AG04450 (cell line): ENCODE measurements at regions of chr9 and their contacts with region 1.

Region 1: DNA sequence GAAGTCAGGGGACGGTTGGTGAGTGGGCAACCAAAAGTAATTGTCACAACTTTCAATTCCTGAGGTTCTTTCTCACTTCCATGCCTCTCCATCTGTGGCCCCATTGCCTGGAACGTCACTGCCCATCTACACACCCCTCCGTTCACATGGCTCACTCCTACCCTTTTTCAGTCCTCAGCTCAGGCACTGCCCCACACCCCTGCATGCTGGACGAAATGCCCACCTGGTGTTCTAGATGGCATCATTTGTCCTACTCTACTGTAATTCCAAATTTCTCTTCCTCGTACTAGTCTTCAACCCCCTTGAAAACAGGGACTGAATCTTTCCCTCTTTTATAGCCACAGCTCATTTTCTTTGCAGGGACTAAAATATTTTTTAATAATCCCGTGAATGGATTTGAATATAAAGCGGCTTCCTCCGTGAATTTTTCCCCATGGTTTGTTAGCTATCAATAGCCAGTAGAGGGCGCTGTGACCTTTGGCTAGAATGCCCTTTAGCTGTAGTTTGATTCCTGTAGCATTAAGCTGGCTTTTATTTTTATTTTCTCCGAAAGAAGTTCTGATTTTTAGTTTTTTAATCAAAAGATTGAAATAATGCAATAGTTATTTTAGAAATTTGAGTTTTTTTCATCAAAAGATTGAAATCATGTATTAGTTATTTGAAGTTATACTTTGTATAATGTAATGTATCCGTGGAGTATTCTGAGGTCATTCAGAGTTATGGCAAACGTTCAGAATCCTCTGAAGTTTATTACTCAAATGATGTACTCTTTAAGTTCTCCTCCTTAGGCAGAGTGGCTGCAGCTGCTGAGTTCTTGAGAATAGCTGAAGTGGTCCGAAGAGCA is 232.1 kb downstream of the SH3GL2 start:
- DNase-seq: peak; percentile 23
- H3K4me3 ChIP-seq: no peak overlapping the region
- H3K27ac ChIP-seq: no peak overlapping the region
- H3K27me3 ChIP-seq: peaks cover 3% of the 10 kb centered on the region
- CTCF ChIP-seq: peak; percentile 92

Region 2: DNA sequence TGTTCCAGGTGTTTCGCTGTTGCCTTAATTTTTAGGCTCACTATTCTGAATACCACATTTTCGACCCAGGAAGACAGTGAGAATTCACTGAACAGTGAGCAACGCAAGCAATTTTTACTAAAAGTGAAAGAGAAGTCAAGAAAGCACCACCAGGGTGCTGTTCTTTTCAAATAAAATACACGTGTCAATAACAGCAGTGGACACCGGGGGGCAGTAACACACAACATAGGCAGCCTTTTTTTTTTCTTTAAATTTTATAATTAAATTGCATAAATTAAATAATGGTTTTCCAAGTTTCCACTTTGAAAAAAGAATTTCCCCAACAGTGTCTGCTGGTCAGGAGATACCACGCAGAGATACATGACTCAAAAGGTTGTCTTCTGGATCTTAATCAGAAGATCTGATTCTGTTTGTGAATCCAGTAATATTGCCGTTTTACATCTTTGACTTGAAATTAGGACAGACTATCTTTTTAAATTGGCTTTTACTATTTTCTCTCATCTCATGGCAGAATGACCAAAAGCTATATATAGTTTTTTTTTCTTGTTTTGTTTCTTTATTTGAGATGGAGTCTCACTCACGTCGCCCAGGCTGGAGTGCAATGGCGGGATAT is 279.2 kb before region 1 on chr9:
- CTCF ChIA-PET with region 1: interaction called, 45 read pairs
- POLR2A ChIA-PET with region 1: no interaction called
- DNase-seq: peak; percentile 13
- H3K4me3 ChIP-seq: peak overlapping the region; percentile 39
- H3K27ac ChIP-seq: no peak overlapping the region
- H3K27me3 ChIP-seq: peaks cover 5% of the 10 kb centered on the region
- CTCF ChIP-seq: peak; percentile 82

Region 3: GRCh38 chr9:17795744-17796143 is 15.2 kb before region 1 on chr9:
- CTCF ChIA-PET with region 1: interaction called, 37 read pairs
- POLR2A ChIA-PET with region 1: no interaction called
- DNase-seq: no peak
- H3K4me3 ChIP-seq: no peak overlapping the region
- H3K27ac ChIP-seq: no peak overlapping the region
- H3K27me3 ChIP-seq: no peaks in the 10 kb centered on the region
- CTCF ChIP-seq: no peak

Region 4: GRCh38 chr9:17837965-17838364 is 27.0 kb after region 1 on chr9:
- CTCF ChIA-PET with region 1: interaction called, 22 read pairs
- POLR2A ChIA-PET with region 1: no interaction called
- DNase-seq: no peak
- H3K4me3 ChIP-seq: no peak overlapping the region
- H3K27ac ChIP-seq: no peak overlapping the region
- H3K27me3 ChIP-seq: no peaks in the 10 kb centered on the region
- CTCF ChIP-seq: peak; percentile 25; the same call in 1 of the 2 replicates

Region 5: GRCh38 chr9:17852108-17852507 is 41.2 kb after region 1 on chr9:
- CTCF ChIA-PET with region 1: no interaction called
- POLR2A ChIA-PET with region 1: no interaction called
- DNase-seq: no peak
- H3K4me3 ChIP-seq: no peak overlapping the region
- H3K27ac ChIP-seq: no peak overlapping the region
- H3K27me3 ChIP-seq: no peaks in the 10 kb centered on the region
- CTCF ChIP-seq: no peak

Region 6: GRCh38 chr9:19028835-19029451 is 1218.0 kb after region 1 on chr9:
- CTCF ChIA-PET with region 1: interaction called, 59 read pairs
- POLR2A ChIA-PET with region 1: no interaction called
- DNase-seq: peak; percentile 52
- H3K4me3 ChIP-seq: no peak overlapping the region
- H3K27ac ChIP-seq: no peak overlapping the region
- H3K27me3 ChIP-seq: peaks cover 2% of the 10 kb centered on the region
- CTCF ChIP-seq: peak; percentile 74